B cell (primary cell): ENCODE measurements at regions of chr3 and their contacts with region 1.

Region 1: DNA sequence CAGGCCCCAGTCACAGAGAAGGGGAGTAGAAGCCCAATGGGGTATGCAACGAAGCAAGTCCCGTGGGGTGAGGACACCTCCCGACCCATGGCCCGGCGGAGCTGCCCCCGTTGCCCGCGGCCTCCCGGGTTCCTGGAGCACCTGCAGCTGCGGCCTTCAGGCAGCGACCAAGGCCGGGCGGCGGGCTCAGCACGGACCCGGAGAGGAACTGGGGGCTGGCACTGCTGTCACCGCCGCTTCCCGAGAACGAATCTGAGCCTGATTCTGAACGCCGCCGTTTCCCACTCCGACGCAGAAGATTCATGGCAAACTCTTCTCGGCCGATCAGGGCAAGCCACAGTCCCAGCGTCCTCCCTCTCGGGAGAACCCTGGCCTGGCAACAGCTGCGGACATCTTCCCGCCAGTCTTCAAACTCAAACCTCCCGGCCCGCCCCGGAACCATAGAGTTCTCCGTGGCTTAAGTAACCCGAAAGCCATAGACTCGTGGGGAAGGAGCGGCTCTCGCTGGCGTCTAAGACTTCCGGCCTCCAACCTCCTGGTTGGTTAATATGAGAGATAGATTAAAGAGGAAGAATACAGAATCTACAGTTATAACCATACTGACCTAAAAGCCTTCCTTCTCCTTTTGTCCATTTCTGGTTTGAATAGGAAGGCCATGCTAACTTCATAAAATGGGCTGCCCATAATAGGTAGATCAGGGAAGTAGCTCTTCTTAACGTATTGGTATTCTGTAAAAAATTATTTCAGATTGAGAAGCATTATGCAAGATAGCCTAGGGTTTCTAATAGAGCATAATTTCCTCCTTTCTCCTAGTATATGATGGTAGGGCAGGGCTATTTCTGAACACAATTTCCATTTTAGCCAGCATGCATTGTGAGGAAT is at the start of gene POLQ:
- DNase-seq: peak; percentile 91
- ATAC-seq: peak; percentile 91
- H3K4me3 ChIP-seq: peak within 1 kb of the TSS; percentile 66 to 98 (median 79)
- H3K4me3 Mint-ChIP-seq: peak within 1 kb of the TSS; percentile 88
- H3K27ac ChIP-seq: peak within 1 kb of the TSS; percentile 55 to 83
- H3K27ac Mint-ChIP-seq: peak within 1 kb of the TSS; percentile 93
- H3K4me1 ChIP-seq: peaks cover 20 to 27% of the 10 kb centered on the region in 2 donors
- H3K4me1 Mint-ChIP-seq: peaks cover 27% of the 10 kb centered on the region
- H3K27me3 ChIP-seq: no peaks in the 10 kb centered on the region
- H3K27me3 Mint-ChIP-seq: no peaks in the 10 kb centered on the region
- CTCF ChIP-seq: no peak
- total RNA-seq, gene POLQ: 0.79 and 0.97 TPM in 2 replicates

Region 2: DNA sequence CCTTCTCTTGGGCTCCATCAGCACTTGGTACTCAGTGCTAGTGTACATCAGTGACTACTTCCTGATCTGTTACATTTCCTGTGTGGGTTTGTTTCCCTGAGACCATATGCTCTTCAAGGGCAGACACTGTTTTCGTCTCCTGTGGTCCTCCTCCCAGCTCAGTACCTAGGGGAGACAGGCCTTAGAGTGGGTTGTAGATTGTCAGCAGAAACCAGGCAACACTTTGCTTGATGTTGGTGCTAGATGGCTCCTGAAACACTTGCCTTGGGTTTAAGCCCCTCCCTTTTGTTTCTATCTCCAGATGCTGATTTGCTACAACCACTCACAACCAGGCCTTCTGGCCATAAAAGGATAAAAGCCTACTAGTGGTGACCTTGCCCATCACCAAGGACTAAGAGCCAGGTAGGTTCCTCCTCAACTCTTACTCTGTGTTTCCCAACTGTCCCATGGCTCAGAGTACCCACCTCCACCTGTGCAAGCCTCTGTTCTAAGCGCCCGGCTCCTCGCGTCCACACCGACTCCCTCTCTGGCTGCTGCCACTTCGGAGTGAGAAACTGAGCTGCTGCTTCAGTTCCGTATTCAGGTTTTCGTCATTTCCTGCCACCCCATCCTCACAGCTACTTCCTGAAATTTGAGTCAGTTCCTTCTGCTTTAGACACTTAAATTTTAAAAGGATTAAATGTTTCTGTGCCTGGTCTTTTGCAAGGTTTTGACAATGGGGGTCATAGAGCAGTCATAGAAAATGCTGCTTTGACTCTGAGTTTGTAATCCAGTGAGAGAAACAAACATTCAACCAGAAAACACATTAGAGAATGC is 114.7 kb after region 1 on chr3 and contains the start of gene HCLS1:
- CTCF ChIA-PET with region 1: no interaction called
- POLR2A ChIA-PET with region 1: no interaction called
- intact Hi-C with region 1: loop called (anchors 1 kb)
- DNase-seq: peak; percentile 91
- ATAC-seq: peak; percentile 84
- H3K4me3 ChIP-seq: peak within 1 kb of the TSS; percentile 59 to 92 (median 68)
- H3K4me3 Mint-ChIP-seq: peak within 1 kb of the TSS; percentile 97
- H3K27ac ChIP-seq: peak within 1 kb of the TSS; percentile 90 to 94
- H3K27ac Mint-ChIP-seq: peak within 1 kb of the TSS; percentile 98
- H3K4me1 ChIP-seq: peaks cover 34 to 39% of the 10 kb centered on the region in 2 donors
- H3K4me1 Mint-ChIP-seq: peaks cover 54% of the 10 kb centered on the region
- H3K27me3 ChIP-seq: no peaks in the 10 kb centered on the region
- H3K27me3 Mint-ChIP-seq: no peaks in the 10 kb centered on the region
- CTCF ChIP-seq: no peak
- total RNA-seq, gene HCLS1: 317 and 331 TPM in 2 replicates

Region 3: GRCh38 chr3:122112754-122113153 is 566.9 kb after region 1 on chr3:
- CTCF ChIA-PET with region 1: interaction called, 3 read pairs
- POLR2A ChIA-PET with region 1: no interaction called
- intact Hi-C with region 1: loop called (anchors 5 kb)
- DNase-seq: peak; percentile 17
- ATAC-seq: no peak
- H3K4me3 ChIP-seq: no peak overlapping the region
- H3K4me3 Mint-ChIP-seq: no peak overlapping the region
- H3K27ac ChIP-seq: no peak overlapping the region
- H3K27ac Mint-ChIP-seq: no peak overlapping the region
- H3K4me1 ChIP-seq: peaks cover 4% of the 10 kb centered on the region in 2 donors
- H3K4me1 Mint-ChIP-seq: peaks cover 8% of the 10 kb centered on the region
- H3K27me3 ChIP-seq: no peaks in the 10 kb centered on the region
- H3K27me3 Mint-ChIP-seq: no peaks in the 10 kb centered on the region
- CTCF ChIP-seq: no peak

Region 4: GRCh38 chr3:122514123-122515019 is 968.6 kb after region 1 on chr3 and contains the start of gene KPNA1:
- CTCF ChIA-PET with region 1: interaction called, 3 read pairs
- POLR2A ChIA-PET with region 1: no interaction called
- intact Hi-C with region 1: loop called (anchors 1 kb)
- DNase-seq: peak; percentile 94
- ATAC-seq: peak; percentile 79
- H3K4me3 ChIP-seq: peak within 1 kb of the TSS; percentile 64 to 90 (median 85)
- H3K4me3 Mint-ChIP-seq: peak within 1 kb of the TSS; percentile 81
- H3K27ac ChIP-seq: peak within 1 kb of the TSS; percentile 92 to 99
- H3K27ac Mint-ChIP-seq: peak within 1 kb of the TSS; percentile 96
- H3K4me1 ChIP-seq: peaks cover 11 to 15% of the 10 kb centered on the region in 2 donors
- H3K4me1 Mint-ChIP-seq: peaks cover 34% of the 10 kb centered on the region
- H3K27me3 ChIP-seq: no peaks in the 10 kb centered on the region
- H3K27me3 Mint-ChIP-seq: no peaks in the 10 kb centered on the region
- CTCF ChIP-seq: no peak
- total RNA-seq, gene KPNA1: 79.4 and 85.9 TPM in 2 replicates

Region 5: GRCh38 chr3:122697952-122698620 is 1152.3 kb after region 1 on chr3:
- CTCF ChIA-PET with region 1: no interaction called
- POLR2A ChIA-PET with region 1: no interaction called
- intact Hi-C with region 1: loop called (anchors 5 kb)
- DNase-seq: peak; percentile 89
- ATAC-seq: peak; percentile 96
- H3K4me3 ChIP-seq: peak overlapping the region in 1 of 5 experiments; percentile 48
- H3K4me3 Mint-ChIP-seq: peak overlapping the region; percentile 59
- H3K27ac ChIP-seq: peak overlapping the region; percentile 84 to 95
- H3K27ac Mint-ChIP-seq: peak overlapping the region; percentile 88
- H3K4me1 ChIP-seq: peaks cover 78 to 83% of the 10 kb centered on the region in 2 donors
- H3K4me1 Mint-ChIP-seq: peaks cover 85% of the 10 kb centered on the region
- H3K27me3 ChIP-seq: no peaks in the 10 kb centered on the region
- H3K27me3 Mint-ChIP-seq: no peaks in the 10 kb centered on the region
- CTCF ChIP-seq: no peak

Region 6: GRCh38 chr3:123258811-123259420 is 1713.1 kb after region 1 on chr3:
- CTCF ChIA-PET with region 1: no interaction called
- POLR2A ChIA-PET with region 1: no interaction called
- intact Hi-C with region 1: loop called (anchors 2 kb)
- DNase-seq: peak; percentile 51
- ATAC-seq: peak; percentile 49
- H3K4me3 ChIP-seq: no peak overlapping the region
- H3K4me3 Mint-ChIP-seq: no peak overlapping the region
- H3K27ac ChIP-seq: no peak overlapping the region
- H3K27ac Mint-ChIP-seq: no peak overlapping the region
- H3K4me1 ChIP-seq: no peaks in the 10 kb centered on the region
- H3K4me1 Mint-ChIP-seq: peaks cover 3% of the 10 kb centered on the region
- H3K27me3 ChIP-seq: no peaks in the 10 kb centered on the region
- H3K27me3 Mint-ChIP-seq: no peaks in the 10 kb centered on the region
- CTCF ChIP-seq: peak; percentile 57